Activated CD4-positive, alpha-beta T cell treated with anti-CD3 and anti-CD28 coated beads for 36 hours (primary cell): ENCODE measurements at regions of chr6 and their contacts with region 1.

Region 1: GRCh38 chr6:111709615-111710398 is 104.1 kb upstream of the TRAF3IP2 start:
- DNase-seq: peak; percentile 73
- ATAC-seq: peak; percentile 81
- H3K4me3 Mint-ChIP-seq: no peak overlapping the region
- H3K27ac Mint-ChIP-seq: peak overlapping the region; percentile 88
- H3K4me1 Mint-ChIP-seq: peaks cover 58% of the 10 kb centered on the region
- H3K27me3 Mint-ChIP-seq: no peaks in the 10 kb centered on the region

Region 2: GRCh38 chr6:111696814-111697213 is 13.0 kb before region 1 on chr6:
- CTCF ChIA-PET with region 1: interaction called, 13 read pairs
- POLR2A ChIA-PET with region 1: no interaction called
- intact Hi-C with region 1: no loop called
- DNase-seq: no peak
- ATAC-seq: no peak
- H3K4me3 Mint-ChIP-seq: no peak overlapping the region
- H3K27ac Mint-ChIP-seq: no peak overlapping the region
- H3K4me1 Mint-ChIP-seq: peaks cover 49% of the 10 kb centered on the region
- H3K27me3 Mint-ChIP-seq: no peaks in the 10 kb centered on the region

Region 3: DNA sequence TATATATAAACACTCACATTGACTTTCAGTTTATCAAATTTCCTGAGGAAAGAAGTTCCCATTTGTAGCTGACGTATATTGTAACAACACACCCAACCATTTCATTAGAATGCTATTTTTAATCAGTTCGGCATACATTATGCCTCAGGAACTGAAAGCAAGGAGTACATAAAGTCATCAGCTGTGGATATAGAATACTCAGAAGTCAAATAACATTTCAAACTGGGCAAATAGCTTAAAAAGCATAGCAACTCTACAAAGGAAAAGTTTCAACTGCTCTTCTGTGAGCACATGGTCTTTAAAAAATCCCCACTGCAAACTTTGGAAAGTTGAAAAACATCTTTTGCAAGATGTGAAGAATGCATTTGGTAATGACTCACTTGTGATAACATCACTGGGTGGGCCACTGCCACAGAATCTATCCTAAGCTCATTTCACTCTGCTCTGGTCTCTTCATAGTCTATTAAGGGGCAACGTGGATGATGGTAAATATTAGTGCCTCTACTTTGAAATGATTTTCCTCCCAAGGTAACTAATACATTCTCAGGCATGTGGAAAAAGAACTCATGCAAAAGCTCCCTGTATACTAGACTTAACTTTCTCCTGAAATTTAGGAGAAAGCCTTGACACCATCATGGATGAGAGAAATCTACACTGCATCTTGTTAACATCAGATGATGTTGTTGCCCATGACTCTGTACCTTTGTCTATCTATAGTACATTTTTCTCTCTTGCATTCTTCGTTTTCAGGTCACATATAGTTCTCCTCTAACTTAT is 114.2 kb after region 1 on chr6:
- CTCF ChIA-PET with region 1: interaction called, 10 read pairs
- POLR2A ChIA-PET with region 1: interaction called, 3 read pairs
- intact Hi-C with region 1: no loop called
- DNase-seq: peak; percentile 49
- ATAC-seq: peak; percentile 64
- H3K4me3 Mint-ChIP-seq: peak overlapping the region; percentile 63
- H3K27ac Mint-ChIP-seq: peak overlapping the region; percentile 97
- H3K4me1 Mint-ChIP-seq: peaks cover 89% of the 10 kb centered on the region
- H3K27me3 Mint-ChIP-seq: no peaks in the 10 kb centered on the region

Region 4: GRCh38 chr6:111950661-111951496 is 241.1 kb after region 1 on chr6:
- CTCF ChIA-PET with region 1: no interaction called
- POLR2A ChIA-PET with region 1: no interaction called
- intact Hi-C with region 1: no loop called
- DNase-seq: no peak
- ATAC-seq: no peak
- H3K4me3 Mint-ChIP-seq: no peak overlapping the region
- H3K27ac Mint-ChIP-seq: no peak overlapping the region
- H3K4me1 Mint-ChIP-seq: peaks cover 14% of the 10 kb centered on the region
- H3K27me3 Mint-ChIP-seq: no peaks in the 10 kb centered on the region

Region 5: GRCh38 chr6:111997078-111997852 is 287.5 kb after region 1 on chr6:
- CTCF ChIA-PET with region 1: interaction called, 44 read pairs
- POLR2A ChIA-PET with region 1: interaction called, 3 read pairs
- intact Hi-C with region 1: loop called (anchors 1 kb)
- DNase-seq: peak; percentile 89
- ATAC-seq: peak; percentile 71
- H3K4me3 Mint-ChIP-seq: peak overlapping the region; percentile 43
- H3K27ac Mint-ChIP-seq: peak overlapping the region; percentile 72
- H3K4me1 Mint-ChIP-seq: peaks cover 51% of the 10 kb centered on the region
- H3K27me3 Mint-ChIP-seq: no peaks in the 10 kb centered on the region

Region 6: DNA sequence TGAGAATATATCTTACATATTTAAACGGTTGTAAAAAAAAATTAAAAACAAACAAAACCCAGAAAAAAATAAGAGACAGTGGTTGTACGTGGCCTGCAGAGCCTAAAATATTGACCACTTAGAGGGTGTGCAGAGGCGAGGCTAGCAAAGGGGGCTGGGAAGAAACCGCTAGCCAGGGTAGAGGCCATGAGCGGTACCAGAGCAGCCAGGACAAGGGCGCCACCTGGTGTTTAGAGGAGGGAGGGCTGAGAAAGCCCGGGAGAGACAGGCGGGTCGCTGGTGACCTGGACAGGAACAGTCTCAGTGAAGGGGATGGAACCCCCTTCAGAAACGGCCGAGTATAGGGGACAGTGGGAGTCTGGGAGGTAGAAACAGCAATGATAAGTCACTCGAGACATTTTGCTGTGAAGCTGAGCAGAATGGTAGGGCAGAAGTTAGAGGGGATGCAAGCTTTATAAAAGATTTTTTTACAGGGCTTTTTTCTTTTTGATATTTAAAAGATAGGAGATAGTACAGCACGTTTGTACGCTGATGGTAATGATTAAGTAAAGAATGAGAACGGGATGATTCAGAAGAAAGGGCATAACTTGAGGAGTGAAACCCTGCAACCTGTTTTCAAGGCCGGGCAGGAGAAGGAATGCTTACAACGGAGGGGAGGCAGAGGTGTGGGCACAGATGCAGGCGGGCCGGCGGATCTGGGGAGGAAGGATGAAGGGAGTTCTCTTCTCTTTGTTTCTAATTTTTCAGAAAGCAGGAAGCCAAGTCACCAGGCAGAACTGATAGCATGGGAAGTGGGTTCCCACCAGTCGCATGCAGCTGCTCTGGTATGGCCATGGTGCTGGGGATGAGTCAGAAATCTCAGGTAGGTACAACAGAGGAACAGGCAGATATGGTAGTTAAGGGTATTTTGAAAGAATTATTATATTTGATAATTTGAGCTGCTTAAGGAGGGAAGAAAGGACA is 453.8 kb after region 1 on chr6:
- CTCF ChIA-PET with region 1: no interaction called
- POLR2A ChIA-PET with region 1: no interaction called
- intact Hi-C with region 1: loop called in 1 of 2 experiments (anchors 10 kb)
- DNase-seq: peak; percentile 90
- ATAC-seq: peak; percentile 98
- H3K4me3 Mint-ChIP-seq: peak overlapping the region; percentile 43
- H3K27ac Mint-ChIP-seq: peak overlapping the region; percentile 51
- H3K4me1 Mint-ChIP-seq: peaks cover 16% of the 10 kb centered on the region
- H3K27me3 Mint-ChIP-seq: peaks cover 35% of the 10 kb centered on the region

Region 7: DNA sequence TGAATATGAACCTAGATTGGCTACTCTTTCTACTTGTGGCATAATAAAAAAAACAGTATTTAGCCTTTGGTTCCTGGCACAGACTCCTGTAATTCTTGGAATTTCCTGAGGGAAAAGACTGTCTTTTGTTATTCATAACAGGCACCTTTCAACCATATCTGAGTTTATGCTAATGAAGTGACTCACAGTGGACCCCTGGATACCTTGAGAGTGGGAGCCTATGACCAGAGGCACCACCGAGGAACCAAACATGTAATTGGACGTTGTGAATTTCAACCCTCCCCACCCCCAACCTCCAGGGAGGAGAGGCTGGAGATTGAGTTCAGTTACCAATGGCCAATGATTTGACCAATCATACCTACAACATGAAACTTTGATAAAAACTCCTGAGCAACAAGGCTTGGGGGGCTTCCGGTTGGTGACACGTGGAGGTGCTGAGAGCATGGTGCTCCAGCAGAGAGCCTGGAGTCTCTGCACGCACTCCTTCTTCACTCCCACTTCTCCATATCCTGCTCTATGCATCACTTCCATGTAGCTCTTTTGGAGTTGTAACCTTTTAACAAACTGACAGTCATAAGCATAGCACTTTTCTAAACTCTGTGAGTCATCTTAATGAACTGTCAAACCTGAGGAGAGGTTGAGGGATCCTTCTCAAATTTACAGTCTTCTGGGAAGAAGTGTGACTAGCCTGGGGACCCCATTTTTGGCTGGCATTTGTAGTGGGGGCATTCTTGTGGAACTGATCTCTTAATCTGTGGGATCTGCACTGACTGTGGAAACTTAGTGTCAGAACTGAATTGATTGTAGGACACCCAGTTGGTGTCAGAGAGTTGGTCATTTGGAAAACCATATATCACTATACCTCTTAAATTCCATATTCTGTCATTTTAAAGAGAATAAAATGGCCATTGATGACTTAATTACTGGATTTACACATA is 496.0 kb after region 1 on chr6:
- CTCF ChIA-PET with region 1: no interaction called
- POLR2A ChIA-PET with region 1: no interaction called
- intact Hi-C with region 1: no loop called
- DNase-seq: no peak
- ATAC-seq: no peak
- H3K4me3 Mint-ChIP-seq: no peak overlapping the region
- H3K27ac Mint-ChIP-seq: no peak overlapping the region
- H3K4me1 Mint-ChIP-seq: no peaks in the 10 kb centered on the region
- H3K27me3 Mint-ChIP-seq: peaks cover 13% of the 10 kb centered on the region